Endothelial cell of umbilical vein (primary cell): ENCODE measurements at regions of chr10 and their contacts with region 1.

Region 1: GRCh38 chr10:14959276-14960057 is at the start of gene MEIG1:
- DNase-seq: peak; percentile 94
- H3K4me3 ChIP-seq: peak within 1 kb of the TSS; percentile 85 to 89 (median 86)
- H3K27ac ChIP-seq: peak within 1 kb of the TSS; percentile 84
- H3K4me1 ChIP-seq: peaks cover 9% of the 10 kb centered on the region
- H3K27me3 ChIP-seq: no peaks in the 10 kb centered on the region
- CTCF ChIP-seq: no peak
- POLR2A ChIP-seq: peak; percentile 44
- total RNA-seq, gene MEIG1: not detected in 2 replicates

Region 2: DNA sequence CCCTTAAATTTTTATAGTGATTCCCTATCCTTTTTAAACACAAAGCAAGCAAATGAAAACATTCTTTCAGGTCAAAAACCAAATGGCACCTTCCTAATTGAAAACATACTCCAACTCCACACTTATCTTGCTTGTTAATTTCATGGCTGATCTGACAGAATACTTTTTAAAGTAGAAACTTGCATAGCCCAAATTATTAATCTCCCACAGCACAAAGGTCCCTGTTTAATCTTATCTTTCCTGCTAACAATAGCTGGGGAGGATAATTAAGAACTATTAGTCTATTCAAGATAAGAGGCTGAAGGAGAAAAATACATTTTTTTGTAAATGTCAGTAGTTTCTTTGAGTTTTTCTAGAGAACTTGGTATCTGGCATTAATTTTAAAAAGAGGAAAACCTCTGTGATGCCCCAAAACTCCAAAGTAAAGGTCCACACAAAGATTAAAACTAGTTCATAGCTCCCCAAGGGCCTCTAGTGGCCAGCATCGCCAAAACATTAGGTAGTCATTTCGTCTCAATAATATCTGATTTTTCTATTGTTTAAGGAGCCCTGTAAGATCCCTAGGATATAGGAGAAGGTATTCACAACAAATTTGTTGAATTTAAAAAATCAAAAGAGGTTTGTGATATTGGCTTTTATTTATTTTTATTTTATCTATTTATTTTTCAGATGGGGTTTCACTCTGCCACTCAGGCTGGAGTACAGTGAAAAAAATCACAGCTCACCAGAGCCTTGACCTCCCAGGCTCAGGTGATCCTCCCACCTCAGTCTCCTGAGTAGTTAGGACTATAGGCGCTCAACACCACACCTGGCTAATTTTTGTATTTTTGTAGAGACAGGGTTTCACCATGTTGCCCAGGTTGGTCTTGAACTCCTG is 136.3 kb before region 1 on chr10:
- CTCF ChIA-PET with region 1: no interaction called
- POLR2A ChIA-PET with region 1: no interaction called
- dilution Hi-C with region 1: no loop called
- intact Hi-C with region 1: no loop called
- DNase-seq: peak; percentile 70
- H3K4me3 ChIP-seq: no peak overlapping the region
- H3K27ac ChIP-seq: no peak overlapping the region
- H3K4me1 ChIP-seq: peaks cover 20% of the 10 kb centered on the region
- H3K27me3 ChIP-seq: peaks cover 0 to 3% of the 10 kb centered on the region in 2 experiments
- CTCF ChIP-seq: peak; percentile 59 to 66
- POLR2A ChIP-seq: no peak

Region 3: DNA sequence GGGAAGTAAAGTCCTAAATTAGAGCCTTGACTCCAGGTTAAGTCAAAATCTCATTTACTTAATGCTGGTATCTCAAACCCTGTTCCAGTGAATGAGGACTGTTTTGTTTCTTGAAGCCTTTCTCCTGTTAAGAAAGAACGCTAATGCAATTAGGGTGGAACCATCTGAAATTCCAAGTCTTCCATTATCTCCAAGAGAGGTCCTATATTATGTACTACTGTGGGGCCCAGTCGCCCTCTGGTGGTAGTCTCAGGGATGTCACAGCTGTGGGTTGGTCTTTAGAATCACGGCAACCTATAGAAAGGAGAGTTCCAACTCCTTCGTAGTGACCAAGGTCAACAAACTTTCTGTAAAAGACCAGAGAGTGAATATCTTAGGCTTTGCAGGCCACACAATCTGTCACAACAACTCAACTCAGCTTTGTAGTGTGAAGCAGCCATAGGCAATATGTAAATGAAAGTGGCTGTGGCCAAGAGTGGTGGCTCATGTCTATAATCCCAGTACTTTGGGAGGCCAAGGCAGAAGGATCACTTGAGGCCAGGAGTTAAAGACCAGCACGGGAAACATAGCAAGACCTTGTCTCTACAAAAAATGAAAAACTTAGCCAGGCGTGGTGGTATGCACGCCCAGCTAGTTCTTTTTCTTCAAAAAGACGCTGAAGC is 147.0 kb after region 1 on chr10:
- CTCF ChIA-PET with region 1: no interaction called
- POLR2A ChIA-PET with region 1: no interaction called
- dilution Hi-C with region 1: no loop called
- intact Hi-C with region 1: loop called (anchors 1 kb)
- DNase-seq: peak; percentile 81
- H3K4me3 ChIP-seq: no peak overlapping the region
- H3K27ac ChIP-seq: peak overlapping the region; percentile 19
- H3K4me1 ChIP-seq: peaks cover 13% of the 10 kb centered on the region
- H3K27me3 ChIP-seq: no peaks in the 10 kb centered on the region
- CTCF ChIP-seq: peak; percentile 81 to 83
- POLR2A ChIP-seq: no peak

Region 4: GRCh38 chr10:15209827-15210509 is 250.5 kb after region 1 on chr10:
- CTCF ChIA-PET with region 1: no interaction called
- POLR2A ChIA-PET with region 1: no interaction called
- dilution Hi-C with region 1: no loop called
- intact Hi-C with region 1: no loop called
- DNase-seq: peak; percentile 72
- H3K4me3 ChIP-seq: no peak overlapping the region
- H3K27ac ChIP-seq: no peak overlapping the region
- H3K4me1 ChIP-seq: peaks cover 11% of the 10 kb centered on the region
- H3K27me3 ChIP-seq: no peaks in the 10 kb centered on the region
- CTCF ChIP-seq: peak; percentile 85 to 86
- POLR2A ChIP-seq: no peak